ENCODE measurements at regions of chrX and their contacts with region 1.

Region 1: DNA sequence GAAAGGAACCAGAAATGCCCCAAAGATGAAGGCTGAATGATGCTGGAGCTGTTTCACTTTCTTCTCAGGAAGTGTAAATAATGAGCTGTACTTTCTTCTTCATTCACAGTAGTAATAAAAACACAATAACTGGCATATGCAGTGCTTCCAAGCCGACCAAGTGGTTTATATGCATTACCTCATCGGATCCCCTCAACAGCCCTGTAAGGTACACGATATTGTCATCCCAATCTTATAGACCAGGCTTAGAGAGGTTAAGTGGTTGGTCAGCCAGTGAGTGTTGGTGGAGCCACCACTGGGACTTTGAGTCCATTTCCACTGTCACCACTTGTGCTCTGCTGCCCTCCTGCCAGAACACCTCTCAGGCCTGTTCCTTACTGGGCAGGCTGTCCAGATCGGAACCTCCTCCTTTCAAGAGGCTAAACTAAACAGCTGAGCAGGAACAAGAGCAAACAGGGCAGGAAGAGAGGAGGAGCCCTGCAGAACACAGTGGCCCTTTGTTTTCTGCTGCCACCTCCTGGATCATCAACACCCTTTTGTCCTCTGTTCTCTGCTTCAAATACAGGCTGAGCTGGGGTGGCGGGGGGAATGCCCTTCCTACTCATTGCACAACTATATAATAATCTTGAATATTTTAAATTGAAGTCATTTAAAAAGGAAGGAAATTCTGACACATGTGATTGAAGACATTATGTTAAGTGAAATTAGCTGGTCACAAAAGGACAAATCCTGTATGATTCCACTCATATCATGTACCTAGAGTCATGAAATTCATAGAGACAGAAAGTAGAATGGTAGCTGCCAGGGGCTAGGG is 112.5 kb upstream of the ATP6AP2 start:
- DNase-seq: peak; percentile 43
- H3K4me3 Mint-ChIP-seq: no peak overlapping the region
- H3K27ac Mint-ChIP-seq: no peak overlapping the region
- H3K4me1 Mint-ChIP-seq: peaks cover 4% of the 10 kb centered on the region
- H3K27me3 Mint-ChIP-seq: peaks cover 96% of the 10 kb centered on the region
- CTCF ChIP-seq: peak; percentile 7

Region 2: GRCh38 chrX:39652336-39653131 is 815.7 kb before region 1 on chrX:
- CTCF ChIA-PET with region 1: interaction called, 3 read pairs
- POLR2A ChIA-PET with region 1: no interaction called
- intact Hi-C with region 1: loop called (anchors 2 kb)
- DNase-seq: peak; percentile 40
- H3K4me3 Mint-ChIP-seq: no peak overlapping the region
- H3K27ac Mint-ChIP-seq: no peak overlapping the region
- H3K4me1 Mint-ChIP-seq: no peaks in the 10 kb centered on the region
- H3K27me3 Mint-ChIP-seq: peaks cover 65% of the 10 kb centered on the region
- CTCF ChIP-seq: peak; percentile 38

Region 3: DNA sequence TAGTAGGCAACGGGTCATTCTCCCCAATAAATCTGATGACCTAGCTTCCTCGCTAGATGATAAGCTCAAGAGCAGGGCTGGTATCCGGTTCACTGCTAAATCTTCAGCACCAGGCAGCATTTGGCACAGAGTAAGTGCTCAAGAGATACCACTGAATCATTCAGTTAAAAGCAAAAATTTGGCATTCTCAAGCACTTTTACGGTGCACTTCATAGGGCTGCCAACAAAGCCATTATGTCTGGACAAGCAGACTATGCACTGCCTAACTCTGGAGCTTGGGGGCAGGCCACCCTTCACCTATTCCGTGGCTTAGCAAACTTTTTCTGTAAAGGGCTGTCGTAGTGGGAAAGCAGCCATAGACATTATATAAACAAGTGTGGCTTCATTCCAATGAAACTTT is 202.9 kb after region 1 on chrX:
- CTCF ChIA-PET with region 1: no interaction called
- POLR2A ChIA-PET with region 1: no interaction called
- intact Hi-C with region 1: no loop called
- DNase-seq: no peak
- H3K4me3 Mint-ChIP-seq: no peak overlapping the region
- H3K27ac Mint-ChIP-seq: no peak overlapping the region
- H3K4me1 Mint-ChIP-seq: no peaks in the 10 kb centered on the region
- H3K27me3 Mint-ChIP-seq: peaks cover 31% of the 10 kb centered on the region
- CTCF ChIP-seq: no peak